PC-9 (cell line): ENCODE measurements at regions of chr4 and their contacts with region 1.

Region 1: DNA sequence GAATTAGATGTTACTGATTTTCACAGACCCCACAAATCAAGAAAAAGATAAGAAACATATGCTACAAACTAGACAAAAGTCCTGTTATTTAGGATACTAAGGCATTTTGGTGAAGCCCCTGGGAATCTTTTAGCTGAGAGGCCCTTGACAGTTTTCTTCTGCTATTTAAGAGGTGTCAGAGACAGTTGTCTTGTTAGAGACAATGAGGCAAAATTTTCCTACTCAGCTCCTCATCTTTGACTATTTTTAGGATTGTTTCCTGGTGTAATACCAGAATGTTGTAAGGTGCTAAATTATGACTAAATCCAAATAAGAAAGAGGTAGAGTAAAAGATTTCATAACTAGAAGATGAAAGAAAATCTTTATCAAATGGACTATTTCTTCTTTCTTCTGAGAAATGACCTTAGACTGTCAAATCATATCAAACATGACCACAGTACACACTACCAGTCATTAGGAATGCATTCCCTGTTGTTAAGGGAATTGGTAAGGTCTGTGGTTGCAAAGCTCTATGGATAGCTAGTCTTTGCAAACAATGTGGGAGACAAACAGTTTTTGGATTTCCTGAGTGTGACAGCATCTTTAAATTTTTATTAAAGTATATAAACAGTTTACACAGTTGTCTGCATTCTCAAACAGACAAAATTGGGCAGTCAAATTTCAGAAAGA is 926.1 kb downstream of the ADGRL3 start:
- DNase-seq: no peak
- H3K4me3 ChIP-seq: no peak overlapping the region
- H3K27ac ChIP-seq: no peak overlapping the region
- H3K4me1 ChIP-seq: no peaks in the 10 kb centered on the region
- H3K27me3 ChIP-seq: no peaks in the 10 kb centered on the region
- CTCF ChIP-seq: no peak

Region 2: DNA sequence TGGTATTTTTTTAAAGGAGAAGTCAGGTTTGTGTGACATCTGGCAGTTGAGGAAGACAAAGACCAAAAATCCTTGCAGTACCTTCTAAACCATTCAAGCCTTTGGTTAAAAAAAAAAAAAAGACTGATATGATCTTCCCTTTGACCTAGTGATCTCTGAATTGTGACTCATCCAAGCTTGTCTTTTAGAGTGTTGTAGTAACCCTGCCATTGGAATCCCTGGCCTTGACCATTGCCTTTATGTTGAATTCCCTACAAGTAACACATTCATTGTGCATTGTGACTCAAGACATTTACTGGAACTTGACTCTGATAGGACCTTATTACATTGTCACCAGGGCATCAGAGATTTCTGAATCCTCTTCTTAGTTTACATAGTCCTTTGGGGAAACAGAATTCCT is 814.0 kb after region 1 on chr4:
- CTCF ChIA-PET with region 1: no interaction called
- POLR2A ChIA-PET with region 1: no interaction called
- intact Hi-C with region 1: loop called (anchors 5 kb)
- DNase-seq: no peak
- H3K4me3 ChIP-seq: no peak overlapping the region
- H3K27ac ChIP-seq: no peak overlapping the region
- H3K4me1 ChIP-seq: no peaks in the 10 kb centered on the region
- H3K27me3 ChIP-seq: no peaks in the 10 kb centered on the region
- CTCF ChIP-seq: no peak